ENCODE measurements at regions of chr2 and their contacts with region 1.

Region 1: GRCh38 chr2:223797811-223798721 is 39.3 kb downstream of the AP1S3 start:
- DNase-seq: no peak
- ATAC-seq: peak; percentile 44 to 64

Region 2: DNA sequence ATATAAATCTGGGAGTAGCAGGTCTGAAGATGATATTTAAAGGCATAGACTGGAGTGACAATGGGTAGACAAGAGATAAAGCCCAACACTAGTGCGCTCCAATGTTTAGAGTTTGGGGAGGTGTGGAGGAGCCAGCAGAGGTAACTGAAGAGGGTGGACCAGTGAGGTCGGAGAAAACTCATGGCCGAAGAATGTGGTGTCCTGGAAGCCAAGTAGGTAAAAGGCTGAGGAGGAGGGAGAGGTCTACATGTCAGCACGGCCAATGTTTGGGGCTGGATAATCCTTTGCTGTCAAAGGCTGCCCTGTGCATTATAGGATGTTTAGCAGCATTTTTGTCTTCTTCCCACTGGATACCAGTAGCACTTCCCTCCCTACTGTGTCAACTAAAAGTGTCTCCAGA is 824.8 kb before region 1 on chr2:
- intact Hi-C with region 1: loop called in 1 of 2 experiments (anchors 2 kb)
- DNase-seq: no peak
- ATAC-seq: peak in 1 of 2 donors; percentile 84

Region 3: DNA sequence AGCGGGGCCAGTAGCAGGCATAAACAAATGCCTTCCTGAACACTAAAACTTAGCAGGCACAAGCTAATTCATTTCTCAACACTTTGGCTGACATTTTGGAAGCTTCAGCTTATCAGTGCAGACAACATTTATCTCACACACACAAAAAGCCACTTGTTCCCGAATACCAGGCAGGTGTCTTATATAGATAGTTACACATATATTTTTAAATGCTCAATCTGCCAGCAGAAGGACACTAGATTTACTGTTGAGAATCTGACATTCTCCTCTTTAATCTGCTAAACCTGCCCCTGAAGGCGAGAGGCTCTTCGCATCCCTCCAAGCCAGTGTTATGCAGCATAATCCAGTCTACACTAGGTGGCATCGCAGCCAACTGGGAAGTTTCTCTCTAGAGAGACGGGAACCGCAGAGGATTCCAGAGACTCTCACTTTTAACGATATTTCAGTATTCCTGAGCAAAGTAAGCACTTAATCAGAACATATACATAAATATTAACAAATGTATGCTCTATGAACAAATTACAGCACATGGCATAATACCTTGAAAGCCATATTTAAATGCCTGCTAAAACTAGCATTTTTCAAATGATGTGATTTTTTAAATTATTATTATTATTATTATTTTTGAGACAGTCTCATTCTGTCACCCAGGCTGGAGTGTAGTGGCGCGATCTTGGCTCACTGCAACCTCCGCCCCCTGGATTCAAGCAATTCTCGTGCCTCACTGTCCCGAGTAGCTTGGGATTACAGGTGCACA is 105.7 kb before region 1 on chr2:
- intact Hi-C with region 1: loop called (anchors 5 to 10 kb)
- DNase-seq: peak; percentile 53
- ATAC-seq: peak; percentile 81

Region 4: DNA sequence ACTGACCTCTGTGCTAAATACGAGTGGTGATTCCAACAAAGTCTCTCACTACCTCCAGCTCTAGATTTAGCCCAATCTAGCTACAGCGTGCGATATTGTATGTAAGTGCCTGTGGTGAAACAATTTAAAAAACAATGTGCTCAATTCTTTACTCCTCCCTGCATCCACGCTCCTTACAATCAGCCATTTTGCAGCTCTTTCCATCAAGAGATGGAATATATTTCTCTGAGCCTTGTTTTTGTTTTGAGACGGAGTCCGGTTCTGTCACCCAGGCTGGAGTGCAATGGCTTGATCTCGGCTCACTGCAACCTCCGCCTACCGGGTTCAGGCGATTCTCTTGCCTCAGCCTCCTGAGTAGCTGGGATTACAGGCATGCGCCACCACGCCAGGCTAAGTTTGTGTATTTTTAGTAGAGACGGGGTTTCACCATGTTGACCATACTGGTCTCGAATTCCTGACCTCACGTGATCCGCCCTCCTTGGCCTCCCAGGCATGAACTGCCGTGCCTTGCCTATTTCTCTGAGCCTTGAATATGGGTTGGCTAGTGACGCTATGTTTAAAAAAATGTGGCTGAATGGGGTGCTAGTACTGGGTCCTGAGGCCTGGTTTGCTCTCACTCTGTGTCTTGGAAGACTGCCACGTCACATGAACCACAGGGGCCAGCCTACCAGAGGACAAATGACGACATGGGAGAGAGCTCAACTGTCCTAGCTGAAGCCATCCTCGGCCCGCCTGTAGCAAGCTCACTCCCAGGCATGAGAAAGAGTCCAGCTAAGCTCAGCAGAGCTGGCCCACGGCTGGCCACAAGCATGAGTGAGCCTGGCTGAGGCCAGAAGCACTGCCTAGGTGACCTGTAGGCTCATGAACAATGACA is 132.3 kb after region 1 on chr2:
- intact Hi-C with region 1: no loop called
- DNase-seq: peak; percentile 68
- ATAC-seq: peak; percentile 91 to 93

Region 5: DNA sequence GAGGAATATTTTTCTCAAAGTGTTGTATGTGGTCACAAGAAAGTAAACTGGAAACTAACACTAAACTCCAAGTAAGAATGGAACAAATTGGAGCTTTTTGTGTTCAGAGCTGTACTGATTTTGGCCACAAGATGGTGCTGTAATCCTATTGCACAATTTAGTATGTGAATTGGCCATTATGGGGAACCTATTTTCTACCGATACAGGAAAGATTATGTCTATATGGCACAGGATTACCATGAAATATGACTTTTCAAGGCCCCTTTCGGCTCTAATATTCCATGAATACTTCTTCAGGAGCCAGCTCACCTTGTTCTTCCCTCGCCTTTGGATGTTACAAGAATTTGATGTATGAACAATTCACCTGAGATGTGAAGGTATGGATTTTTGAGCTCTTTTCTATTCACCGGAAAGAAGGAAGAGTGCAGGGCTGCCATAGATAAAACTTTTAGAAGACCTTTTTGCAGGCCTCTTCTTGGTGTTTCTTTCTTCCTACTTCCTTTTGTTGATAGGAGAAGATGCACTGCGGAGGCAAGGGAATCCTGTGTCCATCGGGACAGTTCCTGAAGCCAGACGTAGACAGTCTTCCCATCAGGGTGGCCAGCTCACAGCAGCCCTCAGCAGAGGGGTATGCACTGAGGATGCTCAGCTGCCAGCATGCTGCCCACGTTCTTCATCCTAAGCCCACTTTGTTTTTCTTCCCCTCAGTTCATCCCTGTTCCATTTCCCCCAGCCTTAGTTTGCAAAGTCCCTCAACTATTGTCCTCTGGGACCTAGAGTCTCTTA is 172.5 kb after region 1 on chr2:
- intact Hi-C with region 1: no loop called
- DNase-seq: no peak
- ATAC-seq: peak in 1 of 2 donors; percentile 58